Posterior cingulate gyrus (tissue), 11 donors: ENCODE measurements at regions of chr6 and their contacts with region 1.

Region 1: GRCh38 chr6:53171605-53172446 is 23.2 kb upstream of the GCM1 start:
- DNase-seq: peak; percentile 86 to 99 (median 92)

Region 2: DNA sequence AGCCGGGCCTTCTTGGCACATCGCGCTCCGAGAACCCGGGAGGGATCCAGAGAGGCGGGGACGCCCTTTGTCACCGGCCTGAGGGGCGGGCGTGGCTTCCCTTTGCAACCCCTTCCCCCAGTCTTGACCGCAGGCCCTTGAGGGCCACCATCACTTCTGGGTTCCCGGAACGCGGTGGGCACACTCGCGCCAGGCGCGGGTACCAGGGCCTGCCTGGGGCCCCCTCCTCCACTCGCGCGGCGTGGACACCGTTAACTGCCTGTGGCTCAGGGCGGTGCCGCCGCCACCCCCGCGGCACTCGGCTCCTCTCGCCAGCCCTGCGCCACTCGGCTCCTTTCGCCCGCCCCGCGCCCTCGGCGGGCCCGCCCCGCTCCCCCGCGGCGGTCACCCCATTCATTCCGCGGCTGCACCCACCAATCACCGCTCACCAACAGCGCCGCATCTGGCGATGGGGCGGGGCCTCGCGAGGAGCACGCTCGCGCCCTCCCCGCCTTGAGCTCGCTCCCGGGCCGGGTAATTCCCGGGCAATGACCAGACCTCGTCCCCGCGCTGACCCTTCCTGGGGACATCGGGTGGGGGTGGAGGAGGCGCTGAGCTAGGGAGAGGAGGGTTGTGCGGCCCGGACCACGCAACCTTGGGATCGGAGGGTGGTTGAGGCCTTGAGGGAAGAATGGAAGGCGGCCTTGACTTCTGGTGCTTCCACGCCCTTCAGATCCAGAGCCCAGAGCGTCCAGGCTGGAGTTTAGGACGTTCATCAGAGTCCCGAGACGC is 187.4 kb after region 1 on chr6:
- intact Hi-C with region 1: loop called (anchors 5 kb)
- DNase-seq: peak; percentile 94 to 99 (median 96)

Region 3: GRCh38 chr6:53437557-53438202 is 265.9 kb after region 1 on chr6:
- intact Hi-C with region 1: loop called (anchors 2 kb)
- DNase-seq: peak in 2 of 10 donors; percentile 21 to 43

Region 4: DNA sequence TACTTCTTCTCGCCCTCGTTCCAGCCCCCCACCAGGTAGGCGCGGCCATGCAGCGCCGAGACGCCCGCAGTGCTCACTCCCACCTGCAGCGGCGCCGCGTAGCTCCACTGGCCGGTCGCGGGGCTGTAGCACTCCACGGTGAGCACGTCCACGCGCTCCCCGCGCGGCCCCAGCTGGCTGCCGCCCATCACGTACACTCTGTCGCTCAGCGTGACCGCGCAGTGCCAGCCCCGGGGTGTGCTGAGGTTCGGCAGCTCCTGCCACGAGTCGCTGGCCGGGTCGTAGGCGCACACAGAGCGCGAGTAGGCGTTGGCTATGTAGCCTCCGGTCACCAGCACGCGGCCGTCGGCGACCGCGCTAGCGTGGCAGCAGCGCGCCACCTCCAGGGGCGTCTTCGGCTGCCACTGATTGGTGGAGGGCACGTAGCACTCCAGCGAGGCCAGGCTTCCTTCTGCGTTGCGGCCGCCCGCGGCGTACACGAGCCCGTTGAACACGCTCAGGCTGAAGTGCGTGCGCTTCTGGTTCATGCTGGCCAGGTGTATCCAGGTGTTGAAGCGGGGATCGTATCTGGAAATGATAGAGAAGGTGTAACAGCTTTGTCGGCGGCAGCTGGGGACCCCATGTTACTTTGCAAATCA is 480.1 kb after region 1 on chr6:
- intact Hi-C with region 1: loop called (anchors 5 kb)
- DNase-seq: peak; percentile 49 to 96 (median 73)